ENCODE measurements at regions of chr1 and their contacts with region 1.

Region 1: DNA sequence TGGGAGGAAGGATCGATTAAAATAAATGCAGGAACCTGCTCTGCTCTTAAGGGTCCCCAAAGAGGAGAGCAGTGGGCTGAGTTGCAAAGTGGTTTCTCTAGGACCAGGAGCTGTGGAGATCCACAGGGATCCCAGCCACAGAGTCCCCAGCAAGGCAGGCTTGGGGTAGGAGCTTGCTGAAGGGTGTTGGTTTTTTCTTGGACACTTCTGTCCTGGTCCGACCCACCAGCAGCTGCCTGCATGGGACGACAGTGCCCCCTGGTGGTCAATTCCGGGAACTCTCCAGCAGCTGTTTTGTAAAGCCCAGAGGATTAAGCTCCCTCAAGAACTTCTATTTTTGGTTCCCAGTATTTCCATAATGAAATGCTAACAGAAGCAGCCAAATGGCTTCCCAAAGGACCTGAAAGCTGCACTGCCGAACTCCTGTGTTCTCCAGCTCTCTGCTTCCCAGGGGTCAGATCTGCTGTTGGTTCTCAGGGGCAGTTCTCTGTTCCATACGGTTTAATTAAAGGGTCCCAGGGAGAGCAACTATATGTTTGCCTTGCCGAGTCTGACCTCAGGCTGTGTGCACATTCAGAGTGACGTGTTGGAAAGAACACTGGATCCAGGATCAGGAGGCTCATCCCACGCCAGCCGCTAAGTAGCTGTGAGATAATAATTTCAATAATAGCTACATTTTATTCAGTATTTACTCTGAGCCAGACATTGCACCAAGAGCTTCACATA is 23.2 kb downstream of the NENF start:
- DNase-seq: peak; percentile 82
- H3K4me3 ChIP-seq: no peak overlapping the region
- H3K27ac ChIP-seq: no peak overlapping the region
- H3K4me1 ChIP-seq: no peaks in the 10 kb centered on the region
- H3K27me3 ChIP-seq: peaks cover 0 to 2% of the 10 kb centered on the region in 2 experiments
- CTCF ChIP-seq: peak; percentile 91
- POLR2A ChIP-seq: no peak

Region 2: DNA sequence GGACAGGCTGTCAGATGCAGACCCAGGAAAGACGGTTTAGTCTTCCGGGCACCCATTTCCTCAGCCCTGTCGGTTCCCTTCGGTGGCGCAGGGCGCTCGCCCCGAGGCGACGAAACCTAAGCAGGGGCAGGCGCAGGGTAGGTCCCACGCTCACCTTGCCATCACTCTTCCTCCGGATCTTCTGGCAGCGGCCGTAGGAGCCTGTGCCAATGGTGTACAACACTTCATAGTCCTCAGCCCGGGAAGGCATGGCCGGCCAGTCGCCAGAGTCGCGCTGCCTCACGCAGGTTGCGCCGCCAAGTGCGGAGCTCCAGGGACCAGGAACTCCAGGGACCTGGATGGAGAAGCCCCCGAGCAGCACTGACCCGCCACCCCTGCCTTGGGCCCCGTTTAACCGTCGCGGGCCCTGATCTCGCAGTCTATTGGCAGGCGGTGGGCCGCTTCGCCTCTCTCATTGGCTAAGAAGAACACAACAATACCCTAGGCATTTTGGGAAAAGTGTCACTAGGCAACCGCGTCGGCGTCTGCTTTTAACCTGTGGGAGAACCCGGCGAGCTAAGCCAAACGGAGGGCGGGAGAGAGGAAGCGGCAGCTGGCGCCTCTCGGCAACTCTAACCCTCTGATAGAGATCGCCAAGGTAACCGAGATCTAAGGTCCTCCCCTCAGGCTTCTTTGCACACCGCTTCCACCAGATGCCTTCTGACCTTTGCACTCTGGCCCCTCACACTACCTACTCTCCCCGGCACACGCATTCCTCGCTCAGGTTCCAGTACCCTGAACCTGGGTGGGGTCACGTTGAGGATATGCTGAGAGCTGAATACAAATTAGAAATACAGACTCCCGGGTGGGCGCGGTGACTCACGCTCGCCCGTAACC is 780.5 kb before region 1 on chr1 and contains the start of gene NEK2:
- CTCF ChIA-PET with region 1: interaction called, 198 read pairs
- POLR2A ChIA-PET with region 1: interaction called, 4 read pairs
- dilution Hi-C with region 1: no loop called
- intact Hi-C with region 1: loop called (anchors 1 kb)
- DNase-seq: peak; percentile 91
- H3K4me3 ChIP-seq: peak within 1 kb of the TSS; percentile 64 to 85 (median 78)
- H3K27ac ChIP-seq: peak within 1 kb of the TSS; percentile 3
- H3K4me1 ChIP-seq: peaks cover 12% of the 10 kb centered on the region
- H3K27me3 ChIP-seq: no peaks in the 10 kb centered on the region
- CTCF ChIP-seq: no peak
- POLR2A ChIP-seq: no peak
- total RNA-seq, gene NEK2: 19.0 and 20.3 TPM in 2 replicates

Region 3: GRCh38 chr1:212035123-212035834 is 420.7 kb before region 1 on chr1 and contains the starts of genes DTL and INTS7:
- CTCF ChIA-PET with region 1: interaction called, 82 read pairs
- POLR2A ChIA-PET with region 1: no interaction called
- dilution Hi-C with region 1: no loop called
- intact Hi-C with region 1: loop called (anchors 1 kb)
- DNase-seq: peak; percentile 99
- H3K4me3 ChIP-seq: peak within 1 kb of the TSS; percentile 70 to 94 (median 78)
- H3K27ac ChIP-seq: peak within 1 kb of the TSS; percentile 71
- H3K4me1 ChIP-seq: peaks cover 36% of the 10 kb centered on the region
- H3K27me3 ChIP-seq: no peaks in the 10 kb centered on the region
- CTCF ChIP-seq: peak; percentile 90 to 95
- POLR2A ChIP-seq: peak; percentile 76
- total RNA-seq, gene DTL: 26.5 and 27.2 TPM in 2 replicates
- total RNA-seq, gene INTS7: 16.1 and 18.1 TPM in 2 replicates

Region 4: GRCh38 chr1:212368073-212368484 is 87.9 kb before region 1 on chr1:
- CTCF ChIA-PET with region 1: interaction called, 63 read pairs
- POLR2A ChIA-PET with region 1: no interaction called
- dilution Hi-C with region 1: no loop called
- intact Hi-C with region 1: loop called (anchors 1 kb)
- DNase-seq: peak; percentile 68
- H3K4me3 ChIP-seq: no peak overlapping the region
- H3K27ac ChIP-seq: no peak overlapping the region
- H3K4me1 ChIP-seq: no peaks in the 10 kb centered on the region
- H3K27me3 ChIP-seq: no peaks in the 10 kb centered on the region
- CTCF ChIP-seq: peak; percentile 77 to 78
- POLR2A ChIP-seq: no peak

Region 5: GRCh38 chr1:212440419-212440818 is 15.5 kb before region 1 on chr1:
- CTCF ChIA-PET with region 1: interaction called, 24 read pairs
- POLR2A ChIA-PET with region 1: no interaction called
- dilution Hi-C with region 1: no loop called
- intact Hi-C with region 1: no loop called
- DNase-seq: no peak
- H3K4me3 ChIP-seq: no peak overlapping the region
- H3K27ac ChIP-seq: no peak overlapping the region
- H3K4me1 ChIP-seq: no peaks in the 10 kb centered on the region
- H3K27me3 ChIP-seq: no peaks in the 10 kb centered on the region
- CTCF ChIP-seq: no peak
- POLR2A ChIP-seq: no peak

Region 6: GRCh38 chr1:212665241-212666115 is 209.5 kb after region 1 on chr1:
- CTCF ChIA-PET with region 1: interaction called, 14 read pairs
- POLR2A ChIA-PET with region 1: no interaction called
- dilution Hi-C with region 1: no loop called
- intact Hi-C with region 1: no loop called
- DNase-seq: peak; percentile 81
- H3K4me3 ChIP-seq: peak overlapping the region in 2 of 3 experiments; percentile 39 to 40
- H3K27ac ChIP-seq: peak overlapping the region; percentile 41
- H3K4me1 ChIP-seq: peaks cover 27% of the 10 kb centered on the region
- H3K27me3 ChIP-seq: peaks cover 3 to 4% of the 10 kb centered on the region in 2 experiments
- CTCF ChIP-seq: peak; percentile 90 to 98
- POLR2A ChIP-seq: no peak